BJ (cell line): ENCODE measurements at regions of chr1 and their contacts with region 1.

Region 1: DNA sequence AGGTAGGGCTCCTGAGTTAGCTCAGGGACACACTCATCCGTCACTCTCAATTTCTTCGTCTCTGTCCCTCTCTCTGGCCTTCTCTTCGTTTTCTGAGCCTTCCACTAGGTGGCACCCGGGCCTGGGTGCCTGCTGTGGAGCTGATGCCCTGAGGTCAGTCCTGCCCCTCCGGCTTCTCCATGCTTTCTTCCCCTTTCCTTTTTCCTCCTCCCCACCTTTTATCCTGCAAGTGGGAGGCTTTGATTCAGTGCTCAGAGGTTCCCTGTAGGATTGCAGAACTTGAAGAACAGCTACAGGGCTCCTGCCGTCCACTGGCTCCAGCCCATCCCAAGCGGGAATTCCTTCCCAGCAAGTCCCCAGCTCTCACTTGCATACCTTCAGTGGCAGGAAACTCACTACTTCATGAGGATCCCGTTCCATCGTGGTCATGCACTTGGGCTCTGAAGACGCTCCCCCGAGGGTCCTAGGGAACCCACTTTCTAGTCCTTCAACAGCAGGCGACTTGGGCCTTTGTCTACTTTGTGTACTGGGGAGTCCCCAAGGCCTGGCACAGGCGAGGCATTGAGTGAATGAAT is 45.6 kb downstream of the SRRM1 start:
- DNase-seq: no peak
- H3K4me3 ChIP-seq: no peak overlapping the region
- H3K27me3 ChIP-seq: no peaks in the 10 kb centered on the region
- CTCF ChIP-seq: peak; percentile 96

Region 2: GRCh38 chr1:23483351-23484252 is 1205.1 kb before region 1 on chr1 and contains the start of gene ASAP3:
- CTCF ChIA-PET with region 1: no interaction called
- POLR2A ChIA-PET with region 1: no interaction called
- DNase-seq: no peak
- H3K4me3 ChIP-seq: peak within 1 kb of the TSS; percentile 78
- H3K27me3 ChIP-seq: peaks cover 5% of the 10 kb centered on the region
- CTCF ChIP-seq: peak; percentile 33; the same call in 1 of the 2 replicates
- polyA plus RNA-seq, gene ASAP3: 22.6 and 33.9 TPM in 2 replicates

Region 3: GRCh38 chr1:24699628-24700027 is 10.9 kb after region 1 on chr1:
- CTCF ChIA-PET with region 1: interaction called, 26 read pairs
- POLR2A ChIA-PET with region 1: no interaction called
- DNase-seq: no peak
- H3K4me3 ChIP-seq: no peak overlapping the region
- H3K27me3 ChIP-seq: no peaks in the 10 kb centered on the region
- CTCF ChIP-seq: no peak

Region 4: DNA sequence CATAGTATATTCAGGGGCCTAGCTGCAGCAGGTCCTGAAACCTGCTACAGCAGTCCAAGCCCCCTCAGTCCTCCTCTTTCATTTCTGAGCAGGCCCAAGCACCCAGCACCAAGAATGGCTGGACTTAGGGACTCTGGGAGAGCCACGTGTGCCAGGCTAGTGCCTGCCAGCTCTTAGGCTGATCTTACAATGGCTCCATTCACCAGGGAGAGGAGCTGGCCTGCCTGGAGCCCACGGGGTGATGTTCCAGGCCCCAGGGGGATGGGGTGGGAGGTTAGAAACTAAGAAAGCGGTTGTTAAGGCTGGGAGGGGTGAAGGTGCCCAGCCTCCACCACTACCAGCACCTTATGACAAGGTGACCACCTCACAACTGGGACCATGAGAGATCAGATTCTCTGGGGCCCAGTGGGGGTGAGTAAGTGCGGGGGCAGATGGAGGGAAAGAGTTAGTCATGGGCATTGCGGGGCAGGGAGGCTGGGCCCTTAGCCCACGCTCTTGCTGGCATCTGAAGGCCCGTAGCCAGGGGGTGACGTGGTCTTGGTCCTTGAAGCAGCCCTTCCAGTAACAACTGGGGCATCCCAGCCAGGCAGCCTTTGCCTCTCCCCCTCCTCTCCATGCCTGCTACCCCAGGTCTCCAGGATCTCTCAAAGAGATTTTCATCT is 26.3 kb after region 1 on chr1:
- CTCF ChIA-PET with region 1: interaction called, 12 read pairs
- POLR2A ChIA-PET with region 1: no interaction called
- DNase-seq: no peak
- H3K4me3 ChIP-seq: no peak overlapping the region
- H3K27me3 ChIP-seq: no peaks in the 10 kb centered on the region
- CTCF ChIP-seq: no peak

Region 5: DNA sequence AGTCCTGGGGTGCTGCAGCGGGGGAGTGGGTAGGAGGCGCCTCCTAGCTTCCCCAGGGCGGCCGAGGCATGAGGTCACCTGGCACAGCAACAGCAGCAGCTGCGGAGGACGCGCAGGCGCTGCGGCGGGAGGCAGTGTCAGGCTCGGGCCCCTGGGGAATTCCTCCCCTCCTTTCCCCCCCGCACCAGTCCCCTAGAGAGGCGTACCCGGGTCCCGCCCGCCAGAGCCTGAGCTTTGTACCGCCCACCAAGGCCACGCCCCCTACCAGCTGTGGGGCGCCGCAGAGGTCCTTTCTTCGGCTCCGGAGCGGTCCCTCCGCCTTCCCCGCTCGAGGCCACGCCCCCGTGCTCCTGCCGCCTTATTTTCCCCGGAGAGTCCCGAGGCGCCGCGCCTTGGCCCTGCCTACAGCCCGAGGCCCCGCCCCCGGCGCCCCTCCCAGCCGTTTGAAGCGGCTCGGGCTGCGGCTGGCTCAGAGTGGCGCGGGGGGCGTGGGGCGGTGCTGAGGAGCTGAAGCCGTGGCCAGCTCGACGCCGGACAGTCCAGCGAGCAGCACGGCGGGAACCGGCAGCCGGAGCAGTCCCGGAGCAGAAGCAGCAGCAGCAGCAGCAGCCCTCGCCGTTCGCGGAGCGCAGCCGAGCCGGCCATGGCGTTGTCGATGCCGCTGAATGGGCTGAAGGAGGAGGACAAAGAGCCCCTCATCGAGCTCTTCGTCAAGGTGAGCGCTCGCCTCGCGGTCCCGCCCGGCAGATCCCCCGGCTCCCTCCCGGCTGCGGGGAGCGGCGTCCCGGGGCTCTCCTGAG is 56.4 kb after region 1 on chr1 and contains the start of gene CLIC4:
- CTCF ChIA-PET with region 1: interaction called, 26 read pairs
- POLR2A ChIA-PET with region 1: interaction called, 4 read pairs
- DNase-seq: peak; percentile 94
- H3K4me3 ChIP-seq: peak within 1 kb of the TSS; percentile 92
- H3K27me3 ChIP-seq: no peaks in the 10 kb centered on the region
- CTCF ChIP-seq: peak; percentile 47
- polyA plus RNA-seq, gene CLIC4: 275 and 547 TPM in 2 replicates

Region 6: DNA sequence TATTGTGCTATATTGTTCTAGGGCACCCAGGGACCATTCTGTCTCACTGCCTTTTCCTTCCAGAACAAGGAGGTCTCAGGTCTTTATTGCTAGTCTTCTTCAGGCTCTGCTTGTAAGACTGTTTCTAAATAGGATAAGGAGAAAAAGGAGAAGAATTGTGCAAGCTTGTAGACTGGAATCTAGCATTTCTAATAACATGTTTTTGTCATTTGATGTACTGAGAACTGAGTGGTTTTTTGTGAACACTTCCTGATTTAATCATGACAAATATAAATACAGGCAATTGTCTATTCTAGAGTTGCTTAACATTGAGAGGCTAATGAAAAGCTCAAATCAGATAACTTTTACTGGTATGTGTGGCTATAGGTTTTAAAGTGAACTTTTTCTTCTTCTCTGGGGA is 134.2 kb after region 1 on chr1:
- CTCF ChIA-PET with region 1: interaction called, 25 read pairs
- POLR2A ChIA-PET with region 1: no interaction called
- DNase-seq: no peak
- H3K4me3 ChIP-seq: no peak overlapping the region
- H3K27me3 ChIP-seq: no peaks in the 10 kb centered on the region
- CTCF ChIP-seq: no peak